Dendritic cell treated with granulocyte-macrophage colony-stimulating factor and Interleukin-4, amounts not matched to agents 40 ng/mL and 50 ng/mL, for 4 days (primary cell): ENCODE measurements at regions of chr16 and their contacts with region 1.

Region 1: DNA sequence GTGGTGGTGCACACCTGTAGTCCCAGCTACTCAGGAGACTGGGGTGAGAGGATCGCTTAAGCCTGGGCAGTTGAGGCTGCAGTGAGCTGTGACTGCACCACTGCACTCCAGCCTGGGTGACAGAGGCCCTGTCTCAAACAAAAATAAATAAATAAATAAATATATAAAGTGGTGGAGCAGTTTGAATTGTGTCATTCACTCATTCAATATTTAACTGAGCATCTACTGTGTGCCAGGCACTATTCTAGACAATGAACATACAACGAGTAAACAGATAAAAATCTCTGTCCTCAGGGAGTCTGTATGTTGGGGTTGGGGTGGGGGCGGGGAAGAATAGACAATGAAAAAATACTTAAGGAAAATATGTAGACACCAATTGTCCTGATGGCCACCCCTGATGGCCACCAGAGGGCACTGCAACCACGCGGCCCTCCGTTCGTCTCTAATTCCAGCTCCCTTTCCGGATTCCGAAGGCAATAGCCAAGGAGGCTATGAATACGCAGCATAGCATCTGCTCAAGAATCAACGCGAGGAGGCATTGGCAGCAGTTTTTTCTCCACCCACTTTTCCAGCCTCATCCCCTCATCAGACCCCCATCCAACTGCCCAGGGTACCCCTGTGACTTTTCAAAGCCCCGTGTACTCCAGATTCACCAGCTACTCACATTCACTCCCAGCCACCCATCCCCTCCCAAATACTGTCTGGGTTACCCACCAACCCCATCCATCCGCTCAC is 21.4 kb downstream of the QPRT start:
- H3K4me3 Mint-ChIP-seq: no peak overlapping the region
- H3K27ac Mint-ChIP-seq: no peak overlapping the region
- H3K4me1 Mint-ChIP-seq: peaks cover 43% of the 10 kb centered on the region
- H3K27me3 Mint-ChIP-seq: peaks cover 31% of the 10 kb centered on the region

Region 2: DNA sequence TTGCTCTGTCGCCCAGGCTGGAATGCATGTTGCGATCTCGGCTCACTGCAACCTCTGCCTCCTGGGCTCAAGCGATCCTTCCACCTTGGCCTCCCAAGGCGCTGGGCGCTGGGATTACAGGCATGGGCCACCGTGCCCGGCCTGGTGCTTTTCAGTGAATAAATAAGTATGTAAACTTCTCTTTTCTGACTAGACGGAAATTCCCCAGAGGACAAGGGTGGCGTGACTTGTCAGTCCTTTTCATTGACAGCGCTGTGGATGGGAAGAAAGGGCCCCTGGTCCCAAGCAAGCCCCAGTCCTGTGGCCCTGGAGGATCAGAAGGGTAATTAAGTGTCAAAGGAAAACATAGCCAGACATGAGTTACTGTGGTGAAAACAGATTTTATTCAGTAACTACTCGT is 46.9 kb before region 1 on chr16:
- intact Hi-C with region 1: loop called (anchors 10 kb)
- H3K4me3 Mint-ChIP-seq: peak overlapping the region; percentile 41
- H3K27ac Mint-ChIP-seq: peak overlapping the region; percentile 84
- H3K4me1 Mint-ChIP-seq: peaks cover 51% of the 10 kb centered on the region
- H3K27me3 Mint-ChIP-seq: no peaks in the 10 kb centered on the region

Region 3: GRCh38 chr16:29891525-29892457 is 191.4 kb after region 1 on chr16:
- intact Hi-C with region 1: no loop called
- H3K4me3 Mint-ChIP-seq: no peak overlapping the region
- H3K27ac Mint-ChIP-seq: no peak overlapping the region
- H3K4me1 Mint-ChIP-seq: peaks cover 11% of the 10 kb centered on the region
- H3K27me3 Mint-ChIP-seq: peaks cover 8% of the 10 kb centered on the region